K562 (cell line): ENCODE measurements at regions of chr1 and their contacts with region 1.

Region 1: GRCh38 chr1:114735479-114735878 is 18.9 kb upstream of the NRAS start:
- DNase-seq: no peak
- ATAC-seq: no peak
- H3K4me3 ChIP-seq: no peak overlapping the region
- H3K27ac ChIP-seq: no peak overlapping the region
- H3K4me1 ChIP-seq: no peaks in the 10 kb centered on the region
- H3K27me3 ChIP-seq: no peaks in the 10 kb centered on the region
- CTCF ChIP-seq: no peak
- EP300 ChIP-seq: no peak
- POLR2A ChIP-seq: no peak
- RAD21 ChIP-seq: no peak

Region 2: DNA sequence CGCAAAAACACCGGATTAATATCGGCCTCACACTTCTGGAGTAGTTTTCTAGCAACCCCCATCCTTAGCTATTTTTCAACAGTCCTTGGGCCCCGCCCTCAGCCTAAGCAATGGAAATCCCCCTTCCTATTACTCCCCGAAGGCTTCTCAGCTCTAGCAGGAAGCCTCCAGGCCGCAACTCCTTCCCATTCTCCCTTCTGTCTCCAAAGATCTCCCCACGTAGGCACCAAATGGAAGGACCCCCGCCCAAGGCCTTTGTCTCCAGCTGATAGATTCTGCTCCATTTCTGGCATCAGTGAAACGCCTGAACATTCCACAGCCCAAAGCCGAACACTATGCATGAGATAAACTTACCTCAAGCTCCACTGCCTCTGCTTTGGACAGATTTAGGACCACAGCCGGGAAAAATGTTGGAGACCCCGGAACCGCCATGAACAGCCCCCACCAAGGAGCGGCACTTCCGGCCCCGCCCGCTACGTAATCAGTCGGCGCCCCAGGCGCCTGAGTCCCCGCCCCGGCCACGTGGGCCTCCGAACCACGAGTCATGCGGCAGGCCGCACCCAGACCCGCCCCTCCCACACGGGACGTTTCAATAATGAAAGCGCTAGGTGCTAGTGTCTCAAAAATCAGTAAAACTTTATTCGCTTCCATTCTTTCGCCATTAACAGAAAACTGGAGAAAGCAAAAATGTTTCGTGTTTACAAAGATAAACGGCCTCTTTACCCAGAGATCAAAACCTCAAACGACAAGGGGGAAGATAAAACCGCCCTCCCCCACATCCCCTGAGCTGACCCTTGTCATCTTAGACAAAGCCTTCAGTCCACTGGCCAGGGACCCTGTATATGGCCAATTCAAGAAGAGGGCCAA is 18.9 kb before region 1 on chr1 and contains the start of gene NRAS:
- CTCF ChIA-PET with region 1: no interaction called
- POLR2A ChIA-PET with region 1: interaction called, 3 read pairs
- in situ Hi-C with region 1: no loop called
- intact Hi-C with region 1: loop called (anchors 2 kb)
- DNase-seq: peak; percentile 96 to 98 (median 96)
- ATAC-seq: peak; percentile 97
- H3K4me3 ChIP-seq: peak within 1 kb of the TSS; percentile 86
- H3K27ac ChIP-seq: peak within 1 kb of the TSS; percentile 97
- H3K4me1 ChIP-seq: peaks cover 0 to 9% of the 10 kb centered on the region in 2 experiments; a peak in 2 of 5 replicates
- H3K27me3 ChIP-seq: no peaks in the 10 kb centered on the region
- CTCF ChIP-seq: peak in 1 of 3 experiments; percentile 6; a peak in 1 of 6 replicates
- EP300 ChIP-seq: peak; percentile 53; the same call in 1 of the 2 replicates
- POLR2A ChIP-seq: peak; percentile 93
- RAD21 ChIP-seq: peak in 1 of 2 experiments; percentile 33; a peak in 3 of 4 replicates
- polyA plus RNA-seq, gene NRAS: 58.2 to 79.7 TPM